Posterior cingulate gyrus (tissue), 11 donors: ENCODE measurements at regions of chr10 and their contacts with region 1.

Region 1: DNA sequence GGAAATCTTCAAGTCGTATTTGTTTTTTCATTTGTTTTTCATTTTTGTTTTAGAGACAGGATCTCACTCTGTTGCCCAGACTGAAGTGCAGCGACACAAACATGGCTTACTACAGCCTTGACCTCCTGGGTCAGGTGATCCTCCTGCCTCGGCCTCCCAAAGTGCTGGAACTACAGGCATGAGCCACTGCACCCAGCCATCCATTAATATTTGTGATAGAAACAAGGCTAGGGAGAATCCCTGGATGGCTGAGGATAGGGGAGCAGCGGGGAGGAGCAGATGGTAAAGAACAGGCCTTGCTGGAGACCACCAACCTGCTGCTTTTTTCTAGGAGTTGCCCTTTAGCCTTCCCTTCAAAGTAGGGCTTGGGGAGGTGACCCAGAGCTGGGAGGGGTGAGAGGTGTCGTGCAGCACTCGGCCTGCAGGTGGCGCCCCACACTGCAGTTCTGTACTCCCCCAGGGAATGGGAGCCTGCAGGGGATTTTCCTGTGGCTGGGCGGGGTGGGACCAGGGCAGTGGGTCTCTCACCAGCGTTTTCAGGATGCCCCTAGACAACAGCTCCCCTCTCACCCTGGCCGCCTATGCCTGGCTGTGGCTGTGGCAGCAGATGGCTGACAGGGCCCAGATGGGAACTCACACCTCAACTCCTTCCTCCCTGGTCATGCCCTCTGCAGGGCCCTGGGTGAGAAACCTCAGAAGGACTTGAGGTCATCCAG is 12.6 kb upstream of the CDH23 start:
- DNase-seq: peak; percentile 53 to 97 (median 86)

Region 2: GRCh38 chr10:71059054-71059818 is 324.9 kb before region 1 on chr10:
- intact Hi-C with region 1: no loop called
- DNase-seq: peak in 2 of 10 donors; percentile 79 to 82

Region 3: DNA sequence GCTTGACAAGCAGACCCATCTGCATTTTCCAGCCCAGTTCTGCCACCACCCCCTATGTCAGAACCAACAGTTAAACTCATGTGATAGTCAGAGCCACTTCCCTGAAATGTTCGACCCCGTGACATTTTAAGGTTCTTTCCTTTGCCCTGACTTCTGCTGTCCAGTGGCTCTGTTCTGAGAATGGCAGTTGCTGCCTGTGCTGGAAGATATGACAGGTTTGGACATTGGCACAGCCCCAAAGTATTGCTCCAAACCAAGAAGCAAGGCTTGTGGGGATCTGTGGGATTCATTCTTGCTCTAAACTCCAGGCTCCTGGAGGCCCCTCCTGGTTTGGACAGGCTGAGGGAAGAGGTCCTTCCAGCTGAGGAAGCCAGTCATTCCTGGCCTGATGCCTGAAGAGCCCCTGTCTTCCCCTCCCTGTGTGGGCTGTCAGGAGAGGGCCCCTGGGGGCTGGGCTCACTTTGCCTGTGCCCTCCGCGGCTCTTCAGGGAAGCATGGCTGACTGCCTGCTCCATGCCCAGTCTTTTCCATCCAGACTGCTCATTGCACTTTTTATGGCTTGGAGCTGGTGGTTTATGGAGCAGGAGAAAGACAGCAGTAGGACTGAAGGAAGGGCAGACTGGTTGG is 150.6 kb after region 1 on chr10:
- intact Hi-C with region 1: no loop called
- DNase-seq: no peak

Region 4: DNA sequence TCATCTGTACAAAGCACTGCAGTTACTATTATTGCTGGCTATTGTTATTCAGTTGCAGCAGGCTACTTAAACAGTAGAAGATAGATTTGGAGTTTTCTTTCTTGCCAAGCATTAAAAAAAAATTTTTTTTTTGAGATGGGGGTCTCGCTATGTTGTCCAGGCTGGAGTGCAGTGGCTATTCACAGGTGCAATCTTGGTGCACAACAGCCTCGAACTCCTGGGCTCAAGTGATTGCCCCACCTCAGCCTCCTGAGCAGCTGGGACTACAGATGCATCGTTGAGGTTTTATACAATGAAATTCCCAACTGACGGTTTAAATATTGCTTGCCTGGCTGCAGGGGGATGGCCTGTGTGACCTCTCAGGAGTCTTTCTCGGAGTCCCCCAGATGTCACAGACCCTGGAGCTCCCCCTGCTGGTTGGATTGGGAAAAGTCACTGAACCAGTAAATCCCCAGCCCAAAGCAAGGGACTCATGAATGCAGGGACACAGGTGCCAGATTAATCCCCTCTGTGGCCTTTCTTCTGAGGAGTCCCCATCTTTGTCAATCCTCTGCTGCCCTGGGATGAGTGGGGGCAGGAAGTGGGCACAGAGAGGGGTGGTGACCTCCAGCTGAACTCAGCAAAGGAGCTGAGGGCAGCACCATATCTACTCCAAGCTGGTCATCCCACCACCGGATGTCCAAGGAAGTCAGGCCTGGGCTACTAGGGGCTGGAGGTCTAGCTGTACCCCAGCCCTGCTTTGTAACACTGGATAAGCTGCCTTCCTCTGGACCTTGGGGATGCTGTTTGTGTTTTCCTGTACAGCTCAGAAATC is 185.9 kb after region 1 on chr10:
- intact Hi-C with region 1: loop called (anchors 1 kb)
- DNase-seq: peak in 8 of 10 donors; percentile 57 to 94 (median 85)

Region 5: GRCh38 chr10:71708301-71708703 is 324.2 kb after region 1 on chr10:
- intact Hi-C with region 1: loop called (anchors 5 kb)
- DNase-seq: peak; percentile 37 to 95 (median 74)

Region 6: GRCh38 chr10:71899665-71900412 is 515.7 kb after region 1 on chr10:
- intact Hi-C with region 1: loop called (anchors 5 kb)
- DNase-seq: peak in 2 of 10 donors; percentile 43 to 73